ENCODE measurements at regions of chr17 and their contacts with region 1.

Region 1: GRCh38 chr17:49567871-49568694 is 7.6 kb upstream of the NXPH3 start:
- DNase-seq: peak; percentile 78 to 92
- ATAC-seq: peak; percentile 63 to 84
- H3K4me3 ChIP-seq: peak overlapping the region; percentile 48
- H3K27ac ChIP-seq: peak overlapping the region; percentile 61 to 82; a peak in 5 of 6 replicates
- H3K4me1 ChIP-seq: no peaks in the 10 kb centered on the region; the same call in 2 of the 3 replicates
- CTCF ChIP-seq: peak; percentile 97
- EP300 ChIP-seq: no peak
- POLR2A ChIP-seq: no peak
- RAD21 ChIP-seq: peak; percentile 99

Region 2: DNA sequence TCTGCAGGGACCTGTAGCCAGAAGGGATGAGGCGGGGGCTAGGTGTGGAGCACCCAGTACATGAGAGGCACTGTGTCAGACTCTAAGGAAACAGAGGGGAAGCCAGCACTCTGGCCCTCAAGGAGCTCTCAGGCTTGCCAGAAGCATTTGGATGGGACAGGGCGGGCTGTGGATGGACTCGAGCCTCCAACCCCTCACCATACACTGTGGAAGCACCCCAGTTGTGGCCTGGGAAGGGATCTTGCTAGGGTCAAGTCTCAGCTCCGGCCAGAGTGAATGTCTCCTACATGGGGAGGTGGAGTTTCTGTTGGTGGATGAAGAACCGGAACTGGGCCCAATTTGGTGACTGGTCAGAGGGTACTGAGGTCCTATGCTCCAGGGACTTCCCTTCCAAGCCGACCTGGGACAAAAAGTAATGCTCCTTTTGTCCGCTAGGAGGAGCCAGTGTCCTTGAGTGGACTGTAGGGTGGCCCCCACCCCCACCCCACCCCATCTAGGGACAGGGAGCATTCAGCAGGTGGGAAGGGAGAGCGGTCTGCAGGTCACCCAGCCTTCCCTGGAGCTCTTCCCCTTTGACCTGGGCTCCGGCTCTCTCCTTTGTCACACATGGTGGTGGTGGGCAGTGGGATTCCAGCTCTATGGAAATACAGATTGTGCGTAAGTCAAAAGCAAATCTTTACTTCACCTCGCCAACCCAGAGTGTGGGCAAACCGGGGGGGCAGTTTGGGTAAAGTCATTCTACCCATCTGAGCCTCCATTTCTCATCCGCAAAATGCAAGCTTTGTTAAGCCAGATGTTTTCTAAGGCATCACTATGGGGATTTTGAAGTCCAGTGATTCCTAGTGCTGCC is 133.0 kb before region 1 on chr17:
- CTCF ChIA-PET with region 1: interaction called, 17 read pairs
- POLR2A ChIA-PET with region 1: no interaction called
- DNase-seq: peak; percentile 73 to 95
- ATAC-seq: peak; percentile 72 to 91
- H3K4me3 ChIP-seq: no peak overlapping the region
- H3K27ac ChIP-seq: no peak overlapping the region
- H3K4me1 ChIP-seq: no peaks in the 10 kb centered on the region
- CTCF ChIP-seq: peak; percentile 83
- EP300 ChIP-seq: no peak
- POLR2A ChIP-seq: no peak
- RAD21 ChIP-seq: peak; percentile 80 to 82

Region 3: DNA sequence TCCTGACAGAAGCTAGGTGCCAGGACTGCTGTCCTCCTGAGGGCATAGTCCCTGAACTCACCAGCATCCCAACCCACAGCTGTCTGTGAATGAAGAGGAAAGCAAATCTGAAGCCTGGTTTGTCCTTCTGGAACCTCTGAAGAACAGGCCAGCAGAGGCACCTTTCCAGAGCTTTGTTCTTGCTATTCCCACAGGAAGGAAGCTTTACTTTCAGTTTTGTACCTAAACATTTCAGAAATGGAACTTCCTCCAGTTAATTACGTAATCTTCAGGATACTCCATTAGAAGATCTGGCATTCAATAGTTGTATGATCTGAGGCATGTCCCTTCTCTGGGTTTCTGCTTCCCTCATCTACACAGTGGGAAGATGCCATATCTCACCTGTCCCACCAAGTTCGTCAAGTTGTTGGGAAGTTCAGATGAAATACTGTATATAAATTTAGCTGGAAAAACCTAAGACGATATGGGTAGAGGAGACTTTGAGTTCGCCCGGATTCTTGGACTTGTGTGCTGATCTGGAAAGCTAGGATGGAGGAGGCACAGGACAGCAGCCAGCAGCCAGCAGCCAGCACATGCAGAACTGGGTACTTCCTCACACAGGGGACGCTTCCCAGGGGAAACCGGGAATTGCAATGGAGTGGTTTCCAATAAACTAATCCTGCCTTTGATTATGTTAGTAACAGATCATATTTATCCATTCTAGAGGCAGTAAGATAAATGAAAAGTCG is 30.0 kb after region 1 on chr17:
- CTCF ChIA-PET with region 1: interaction called, 21 read pairs
- POLR2A ChIA-PET with region 1: no interaction called
- DNase-seq: no peak
- ATAC-seq: no peak
- H3K4me3 ChIP-seq: no peak overlapping the region
- H3K27ac ChIP-seq: no peak overlapping the region
- H3K4me1 ChIP-seq: no peaks in the 10 kb centered on the region
- CTCF ChIP-seq: no peak
- EP300 ChIP-seq: no peak
- POLR2A ChIP-seq: no peak
- RAD21 ChIP-seq: no peak

Region 4: DNA sequence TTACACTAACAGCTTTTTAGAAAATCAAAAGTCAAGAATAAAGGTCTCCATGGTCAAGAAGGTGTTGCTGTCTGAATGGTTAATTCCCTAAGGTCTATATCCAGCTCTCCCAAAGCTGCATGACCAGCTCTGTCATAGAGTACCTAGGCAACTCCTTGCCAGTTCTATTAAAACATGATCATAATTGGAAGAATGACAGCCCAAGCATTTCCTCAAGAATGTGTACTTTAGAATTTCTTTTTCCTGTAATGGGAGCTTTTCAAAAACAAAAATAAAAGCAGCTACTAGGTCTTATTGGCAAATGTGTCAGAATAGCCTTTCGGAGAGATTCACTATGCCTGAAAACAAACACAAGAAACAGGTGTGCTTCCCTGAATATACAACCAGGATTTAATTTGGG is 101.9 kb after region 1 on chr17:
- CTCF ChIA-PET with region 1: interaction called, 15 read pairs
- POLR2A ChIA-PET with region 1: no interaction called
- DNase-seq: no peak
- ATAC-seq: no peak
- H3K4me3 ChIP-seq: no peak overlapping the region
- H3K27ac ChIP-seq: no peak overlapping the region
- H3K4me1 ChIP-seq: peaks cover 1% of the 10 kb centered on the region; the same call in 1 of the 3 replicates
- CTCF ChIP-seq: no peak
- EP300 ChIP-seq: no peak
- POLR2A ChIP-seq: no peak
- RAD21 ChIP-seq: no peak

Region 5: GRCh38 chr17:49779739-49780231 is 211.7 kb after region 1 on chr17:
- CTCF ChIA-PET with region 1: interaction called, 16 read pairs
- POLR2A ChIA-PET with region 1: no interaction called
- DNase-seq: peak; percentile 34 to 60
- ATAC-seq: peak; percentile 84 to 86
- H3K4me3 ChIP-seq: no peak overlapping the region
- H3K27ac ChIP-seq: no peak overlapping the region
- H3K4me1 ChIP-seq: no peaks in the 10 kb centered on the region
- CTCF ChIP-seq: peak; percentile 54
- EP300 ChIP-seq: no peak
- POLR2A ChIP-seq: no peak
- RAD21 ChIP-seq: peak; percentile 37 to 54; a peak in 4 of 5 replicates